Activated T-helper 2 cell treated with anti-CD3 and anti-CD28 coated beads, Interferon-gamma antibody, Interleukin-2, Interleukin-4, amounts not matched to agents 10 μg/mL and 5 μg/mL and 100 μg/mL, durations not matched to agents 14 hours and 24 hours and 36 hours (primary cell): ENCODE measurements at regions of chrX and their contacts with region 1.

Region 1: DNA sequence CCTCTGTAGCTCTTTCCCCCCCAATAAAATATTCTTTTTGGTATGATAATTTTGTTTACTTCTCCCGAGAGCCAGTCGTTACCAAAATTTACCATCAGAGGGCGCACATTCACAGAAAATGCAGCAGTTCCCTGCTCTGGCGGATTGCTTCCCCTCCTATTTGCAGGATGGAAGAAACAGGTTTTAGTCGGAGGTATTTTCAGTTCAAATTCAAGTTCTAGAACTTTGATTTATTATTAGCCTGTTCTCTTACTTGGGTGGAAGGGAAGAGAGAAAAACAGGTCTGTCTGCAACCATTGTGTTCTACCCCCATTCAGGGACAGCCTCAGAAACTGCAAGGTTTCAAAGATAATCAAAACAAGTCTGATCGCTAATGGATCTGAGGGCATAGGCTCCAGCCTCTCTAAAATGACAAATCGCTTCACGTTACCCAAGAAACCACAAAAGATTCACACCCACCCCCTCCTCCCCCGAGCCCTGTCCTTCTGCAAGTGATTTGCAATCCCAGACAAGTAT is 263.8 kb upstream of the RPS6KA3 start:
- DNase-seq: peak; percentile 15
- H3K4me3 Mint-ChIP-seq: no peak overlapping the region
- H3K27ac Mint-ChIP-seq: no peak overlapping the region
- H3K4me1 Mint-ChIP-seq: peaks cover 8% of the 10 kb centered on the region
- H3K27me3 Mint-ChIP-seq: peaks cover 48% of the 10 kb centered on the region

Region 2: GRCh38 chrX:20252381-20253231 is 277.9 kb before region 1 on chrX:
- intact Hi-C with region 1: loop called (anchors 5 kb)
- DNase-seq: peak; percentile 44
- H3K4me3 Mint-ChIP-seq: no peak overlapping the region
- H3K27ac Mint-ChIP-seq: peak overlapping the region; percentile 60
- H3K4me1 Mint-ChIP-seq: peaks cover 28% of the 10 kb centered on the region
- H3K27me3 Mint-ChIP-seq: no peaks in the 10 kb centered on the region

Region 3: DNA sequence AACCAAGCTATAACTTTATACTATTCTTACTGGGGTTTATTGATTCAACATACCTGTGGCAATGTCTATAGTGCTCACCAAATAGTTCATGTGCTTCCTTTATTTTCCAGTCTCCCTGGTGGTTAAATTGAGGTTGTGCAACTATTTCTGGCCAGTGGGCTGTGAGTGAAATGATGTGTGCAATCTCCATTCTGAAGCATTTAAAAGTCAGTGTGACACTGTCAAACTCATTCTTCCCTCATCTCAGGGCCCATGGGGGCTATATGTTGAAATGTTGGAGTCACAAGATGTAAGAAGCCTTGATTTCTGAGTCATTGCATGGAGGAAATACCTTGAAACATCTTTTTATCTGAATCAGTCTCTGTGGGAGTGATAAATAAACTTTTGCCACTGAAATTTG is 150.5 kb after region 1 on chrX:
- intact Hi-C with region 1: loop called (anchors 10 kb)
- DNase-seq: no peak
- H3K4me3 Mint-ChIP-seq: no peak overlapping the region
- H3K27ac Mint-ChIP-seq: no peak overlapping the region
- H3K4me1 Mint-ChIP-seq: no peaks in the 10 kb centered on the region
- H3K27me3 Mint-ChIP-seq: no peaks in the 10 kb centered on the region

Region 4: DNA sequence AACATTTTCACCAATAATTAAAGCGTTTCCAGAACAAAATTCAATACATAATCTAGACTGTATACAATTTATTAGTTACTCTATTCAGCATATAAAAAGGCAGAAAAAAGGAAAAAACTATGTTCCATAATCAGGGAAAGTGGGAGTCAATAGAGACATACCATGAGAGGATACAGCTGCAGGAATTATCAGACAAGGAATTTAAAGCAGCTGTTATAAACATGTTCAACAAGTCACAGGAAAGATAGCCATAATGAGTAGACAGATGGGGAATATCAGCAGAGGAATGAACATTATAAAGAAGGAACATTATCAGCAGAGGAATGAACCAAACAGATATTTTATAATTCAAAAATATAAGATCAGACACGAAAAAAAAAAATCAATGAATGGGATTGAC is 236.9 kb after region 1 on chrX:
- intact Hi-C with region 1: no loop called
- DNase-seq: no peak
- H3K4me3 Mint-ChIP-seq: no peak overlapping the region
- H3K27ac Mint-ChIP-seq: no peak overlapping the region
- H3K4me1 Mint-ChIP-seq: no peaks in the 10 kb centered on the region
- H3K27me3 Mint-ChIP-seq: no peaks in the 10 kb centered on the region

Region 5: DNA sequence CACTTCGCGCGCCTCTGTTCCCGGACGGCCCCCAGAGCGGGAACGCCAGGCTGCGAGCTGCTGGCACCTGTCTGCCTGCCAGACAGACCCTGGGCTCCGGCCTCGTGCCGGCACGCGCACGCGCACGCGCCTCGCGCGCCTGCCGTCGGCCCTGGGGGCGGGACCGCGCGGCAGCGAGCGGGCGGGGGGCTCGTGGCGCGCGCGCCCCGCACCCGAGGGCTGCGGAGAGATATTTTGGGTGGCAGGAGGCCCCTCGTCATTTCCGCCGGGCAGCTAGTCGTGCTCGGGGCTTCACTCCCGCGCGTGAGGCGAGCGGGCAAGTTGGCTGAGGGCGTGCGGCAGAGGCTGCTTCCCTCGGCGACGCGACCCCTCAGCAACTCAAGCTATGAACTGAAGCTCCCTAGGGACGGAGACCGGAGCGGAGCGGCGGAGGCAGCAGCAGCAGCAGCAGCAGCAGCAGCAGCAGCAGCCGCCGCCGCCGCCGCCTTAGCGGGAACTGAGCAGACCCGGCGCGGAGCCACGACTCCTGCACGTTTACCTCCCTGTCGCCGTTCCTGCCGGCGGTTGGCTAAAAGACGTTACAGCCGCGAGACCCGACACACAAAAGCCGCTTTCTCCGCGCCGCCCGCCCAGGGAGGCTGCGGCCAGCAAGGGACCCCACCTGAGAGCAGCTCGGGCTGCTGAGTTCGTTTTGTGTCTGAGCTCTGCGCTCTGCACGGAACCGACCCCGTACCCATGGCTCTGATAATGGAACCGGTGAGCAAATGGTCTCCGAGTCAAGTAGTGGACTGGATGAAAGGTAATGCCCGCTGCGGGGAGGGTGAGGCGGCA is 843.9 kb after region 1 on chrX and contains the start of gene CNKSR2:
- intact Hi-C with region 1: loop called (anchors 10 kb)
- DNase-seq: peak; percentile 64
- H3K4me3 Mint-ChIP-seq: peak within 1 kb of the TSS; percentile 89
- H3K27ac Mint-ChIP-seq: peak within 1 kb of the TSS; percentile 72
- H3K4me1 Mint-ChIP-seq: peaks cover 31% of the 10 kb centered on the region
- H3K27me3 Mint-ChIP-seq: no peaks in the 10 kb centered on the region
- total RNA-seq, gene CNKSR2: 11.3 and 13.4 TPM in 2 replicates

Region 6: GRCh38 chrX:21479695-21480270 is 949.3 kb after region 1 on chrX:
- intact Hi-C with region 1: loop called (anchors 5 kb)
- DNase-seq: no peak
- H3K4me3 Mint-ChIP-seq: no peak overlapping the region
- H3K27ac Mint-ChIP-seq: no peak overlapping the region
- H3K4me1 Mint-ChIP-seq: peaks cover 1% of the 10 kb centered on the region
- H3K27me3 Mint-ChIP-seq: no peaks in the 10 kb centered on the region

Region 7: DNA sequence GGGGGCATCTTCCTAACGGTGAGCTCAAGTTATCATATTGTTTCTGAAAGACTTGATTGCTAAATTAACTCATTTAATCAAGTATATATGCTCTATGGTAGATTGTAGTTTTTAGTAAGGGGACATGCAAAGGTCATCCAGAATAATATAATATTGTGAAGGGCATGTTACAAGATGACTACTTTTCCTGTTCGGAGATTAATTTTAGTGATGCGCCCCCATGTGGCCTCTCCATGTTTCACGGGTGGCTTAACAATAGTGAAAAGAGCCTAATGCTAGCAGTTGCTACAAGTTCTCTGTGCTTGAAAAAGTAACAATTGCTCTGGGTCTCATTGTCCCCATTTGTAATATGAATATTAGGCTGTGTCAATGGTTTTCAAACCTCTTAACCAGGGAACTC is 1215.3 kb after region 1 on chrX:
- intact Hi-C with region 1: loop called (anchors 2 kb)
- DNase-seq: peak; percentile 9
- H3K4me3 Mint-ChIP-seq: no peak overlapping the region
- H3K27ac Mint-ChIP-seq: no peak overlapping the region
- H3K4me1 Mint-ChIP-seq: no peaks in the 10 kb centered on the region
- H3K27me3 Mint-ChIP-seq: peaks cover 15% of the 10 kb centered on the region

Region 8: GRCh38 chrX:21940356-21940829 is 1409.9 kb after region 1 on chrX and contains the start of gene SMS:
- intact Hi-C with region 1: loop called (anchors 10 kb)
- DNase-seq: peak; percentile 24
- H3K4me3 Mint-ChIP-seq: peak within 1 kb of the TSS; percentile 87
- H3K27ac Mint-ChIP-seq: peak within 1 kb of the TSS; percentile 93
- H3K4me1 Mint-ChIP-seq: peaks cover 31% of the 10 kb centered on the region
- H3K27me3 Mint-ChIP-seq: no peaks in the 10 kb centered on the region
- total RNA-seq, gene SMS: 143 TPM in 2 replicates